GM10248 (cell line): ENCODE measurements at regions of chr1 and their contacts with region 1.

Region 1: GRCh38 chr1:31961536-31961935 is 23.4 kb upstream of the PTP4A2 start:
- DNase-seq: peak; percentile 49
- CTCF ChIP-seq: no peak

Region 2: DNA sequence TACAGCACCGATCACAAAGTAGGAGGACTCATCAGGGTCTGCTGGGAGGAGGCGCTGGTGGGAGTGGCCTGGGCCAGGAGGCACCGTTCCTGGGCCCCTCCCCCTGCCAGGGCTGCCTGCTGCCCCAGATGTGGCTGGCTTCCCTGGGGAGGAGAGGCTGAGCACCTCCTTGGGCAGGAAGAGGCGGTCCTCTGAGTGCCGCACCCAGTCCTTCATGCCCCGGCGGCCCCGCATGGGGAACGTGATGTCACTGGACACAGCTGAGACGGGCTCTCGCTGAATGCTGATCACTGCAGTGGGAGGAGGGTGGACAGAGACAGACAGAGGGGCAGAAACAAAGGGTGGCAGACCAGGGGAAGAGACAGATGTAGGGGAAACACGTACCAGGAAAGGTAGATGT is 222.2 kb before region 1 on chr1:
- CTCF ChIA-PET with region 1: no interaction called
- POLR2A ChIA-PET with region 1: no interaction called
- DNase-seq: no peak
- CTCF ChIP-seq: no peak

Region 3: GRCh38 chr1:31781756-31782371 is 179.7 kb before region 1 on chr1:
- CTCF ChIA-PET with region 1: no interaction called
- POLR2A ChIA-PET with region 1: no interaction called
- DNase-seq: no peak
- CTCF ChIP-seq: no peak

Region 4: GRCh38 chr1:31923901-31924535 is 37.5 kb before region 1 on chr1:
- CTCF ChIA-PET with region 1: interaction called, 21 read pairs
- POLR2A ChIA-PET with region 1: interaction called, 4 read pairs
- DNase-seq: no peak
- CTCF ChIP-seq: no peak

Region 5: GRCh38 chr1:31984419-31985347 is 23.1 kb after region 1 on chr1:
- CTCF ChIA-PET with region 1: interaction called, 38 read pairs
- POLR2A ChIA-PET with region 1: no interaction called
- DNase-seq: no peak
- CTCF ChIP-seq: no peak

Region 6: DNA sequence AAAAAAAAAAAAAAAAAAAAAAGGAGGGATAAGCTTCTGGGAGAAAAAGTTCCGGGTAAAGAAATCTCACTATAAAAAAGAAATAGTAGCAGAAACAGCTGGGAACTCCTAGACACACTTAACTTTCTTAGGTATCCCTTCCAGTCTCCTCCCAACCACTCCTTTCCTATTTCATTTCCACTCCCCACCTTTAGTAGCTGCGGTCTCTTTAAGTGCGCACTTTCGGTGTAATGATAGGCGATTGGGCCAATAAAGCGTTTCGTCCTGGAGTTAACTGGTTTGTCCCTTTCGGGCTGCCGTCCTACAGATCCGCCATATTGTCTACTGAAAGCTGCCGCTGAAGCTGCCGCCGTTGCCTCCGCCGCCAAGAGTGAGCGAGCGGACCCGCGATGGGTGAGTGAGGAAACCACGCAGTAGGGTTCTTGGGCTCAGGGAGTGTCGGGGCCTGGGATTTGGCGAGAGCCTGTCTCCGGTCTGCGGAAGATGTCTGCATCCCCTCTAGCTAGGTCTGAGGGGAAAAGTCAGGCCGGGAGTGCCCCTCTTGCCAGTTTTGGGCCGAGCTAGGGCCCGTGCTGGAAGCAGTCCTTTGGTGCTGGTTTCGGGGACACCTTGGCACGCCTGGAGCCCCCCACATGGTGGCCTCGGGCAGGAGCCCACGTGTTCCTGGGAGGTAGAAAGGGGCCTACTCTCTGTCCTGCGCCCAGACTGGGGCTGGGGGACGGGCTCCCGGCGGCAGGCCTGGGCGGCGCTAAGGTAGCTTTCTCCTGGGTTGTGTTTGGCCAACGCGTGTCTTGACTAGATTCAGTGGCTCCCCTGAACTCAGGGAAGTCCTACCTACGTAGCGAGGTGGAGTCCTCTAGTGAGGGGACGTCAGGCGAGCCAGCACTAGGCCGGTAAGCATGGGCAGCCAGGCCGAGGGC is 146.5 kb after region 1 on chr1 and contains the start of gene KPNA6:
- CTCF ChIA-PET with region 1: no interaction called
- POLR2A ChIA-PET with region 1: no interaction called
- DNase-seq: peak; percentile 85
- CTCF ChIP-seq: no peak

Region 7: GRCh38 chr1:32870615-32871363 is 909.3 kb after region 1 on chr1 and contains the start of gene FNDC5:
- CTCF ChIA-PET with region 1: no interaction called
- POLR2A ChIA-PET with region 1: no interaction called
- DNase-seq: no peak
- CTCF ChIP-seq: no peak